ENCODE measurements at regions of chr3 and their contacts with region 1.

Region 1: GRCh38 chr3:179653096-179653797 is 407 bp downstream of the USP13 start:
- DNase-seq: peak; percentile 79 to 90 (median 89)
- ATAC-seq: peak; percentile 90
- H3K4me3 ChIP-seq: peak overlapping the region; percentile 96
- H3K27ac ChIP-seq: peak overlapping the region; percentile 99
- H3K4me1 ChIP-seq: peaks cover 2% of the 10 kb centered on the region
- H3K27me3 ChIP-seq: no peaks in the 10 kb centered on the region

Region 2: GRCh38 chr3:179716811-179717210 is 63.6 kb after region 1 on chr3:
- intact Hi-C with region 1: loop called in 1 of 4 experiments (anchors 10 kb)
- DNase-seq: no peak
- ATAC-seq: no peak
- H3K4me3 ChIP-seq: no peak overlapping the region
- H3K27ac ChIP-seq: no peak overlapping the region
- H3K4me1 ChIP-seq: peaks cover 4% of the 10 kb centered on the region
- H3K27me3 ChIP-seq: no peaks in the 10 kb centered on the region

Region 3: GRCh38 chr3:179743913-179744312 is 90.7 kb after region 1 on chr3:
- intact Hi-C with region 1: loop called in 1 of 4 experiments (anchors 10 kb)
- DNase-seq: no peak
- ATAC-seq: no peak
- H3K4me3 ChIP-seq: no peak overlapping the region
- H3K27ac ChIP-seq: no peak overlapping the region
- H3K4me1 ChIP-seq: peaks cover 3% of the 10 kb centered on the region
- H3K27me3 ChIP-seq: no peaks in the 10 kb centered on the region

Measured in right cardiac atrium (tissue), 5 donors.